H1 (cell line): ENCODE measurements at regions of chr4 and their contacts with region 1.

Region 1: GRCh38 chr4:38675146-38676121 is 11.4 kb downstream of the KLF3 start:
- DNase-seq: peak in 1 of 2 experiments; percentile 87
- H3K4me3 ChIP-seq: no peak overlapping the region
- H3K27ac ChIP-seq: no peak overlapping the region
- H3K4me1 ChIP-seq: peaks cover 22 to 41% (median 26%) of the 10 kb centered on the region in 4 experiments
- H3K27me3 ChIP-seq: no peaks in the 10 kb centered on the region
- CTCF ChIP-seq: peak; percentile 47 to 87 (median 86)
- EP300 ChIP-seq: no peak
- POLR2A ChIP-seq: no peak
- RAD21 ChIP-seq: peak; percentile 98 to 100

Region 2: GRCh38 chr4:38319456-38320342 is 355.7 kb before region 1 on chr4:
- CTCF ChIA-PET with region 1: interaction called, 28 read pairs
- POLR2A ChIA-PET with region 1: no interaction called
- DNase-seq: peak; percentile 76 to 100
- H3K4me3 ChIP-seq: no peak overlapping the region; a peak in 1 of 8 replicates
- H3K27ac ChIP-seq: no peak overlapping the region
- H3K4me1 ChIP-seq: peaks cover 0 to 3% (median under 1%) of the 10 kb centered on the region in 4 experiments; a peak in 1 of 7 replicates
- H3K27me3 ChIP-seq: no peaks in the 10 kb centered on the region
- CTCF ChIP-seq: peak; percentile 86 to 94 (median 94)
- EP300 ChIP-seq: no peak
- POLR2A ChIP-seq: no peak
- RAD21 ChIP-seq: peak; percentile 91 to 92

Region 3: DNA sequence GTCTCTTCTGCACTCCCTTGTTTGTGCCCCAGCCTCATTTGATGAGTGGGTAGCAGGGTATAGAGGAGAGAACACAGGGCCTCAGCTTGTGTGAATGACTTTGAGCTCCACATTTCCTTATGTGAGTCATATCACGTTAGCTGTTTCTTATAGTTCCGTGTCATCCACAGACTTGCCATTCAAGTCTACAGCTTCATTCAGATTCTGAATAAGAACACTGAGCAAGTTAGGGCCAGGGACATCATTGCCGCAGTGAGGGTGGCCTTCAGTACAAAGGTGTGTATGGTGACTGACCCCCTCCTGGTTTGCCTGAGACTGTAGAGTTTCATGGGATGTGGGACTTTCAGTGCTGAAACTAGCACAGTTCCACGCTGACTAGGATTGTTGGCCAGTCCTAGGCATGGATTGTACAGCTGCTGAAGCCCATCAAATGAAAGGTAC is 12.2 kb after region 1 on chr4:
- CTCF ChIA-PET with region 1: interaction called, 11 read pairs
- POLR2A ChIA-PET with region 1: interaction called, 3 read pairs
- DNase-seq: no peak
- H3K4me3 ChIP-seq: no peak overlapping the region
- H3K27ac ChIP-seq: no peak overlapping the region
- H3K4me1 ChIP-seq: no peaks in the 10 kb centered on the region
- H3K27me3 ChIP-seq: no peaks in the 10 kb centered on the region
- CTCF ChIP-seq: no peak
- EP300 ChIP-seq: no peak
- POLR2A ChIP-seq: no peak
- RAD21 ChIP-seq: no peak

Region 4: GRCh38 chr4:38785901-38786402 is 110.5 kb after region 1 on chr4:
- CTCF ChIA-PET with region 1: no interaction called
- POLR2A ChIA-PET with region 1: no interaction called
- DNase-seq: no peak
- H3K4me3 ChIP-seq: no peak overlapping the region
- H3K27ac ChIP-seq: no peak overlapping the region
- H3K4me1 ChIP-seq: no peaks in the 10 kb centered on the region
- H3K27me3 ChIP-seq: no peaks in the 10 kb centered on the region
- CTCF ChIP-seq: no peak
- EP300 ChIP-seq: no peak
- POLR2A ChIP-seq: no peak
- RAD21 ChIP-seq: no peak